BJ (cell line): ENCODE measurements at regions of chr11 and their contacts with region 1.

Region 1: GRCh38 chr11:86608251-86608799 is 64.1 kb downstream of the ME3 start:
- DNase-seq: peak; percentile 26
- H3K4me3 ChIP-seq: no peak overlapping the region
- H3K27me3 ChIP-seq: no peaks in the 10 kb centered on the region
- CTCF ChIP-seq: peak; percentile 88

Region 2: GRCh38 chr11:86456052-86456939 is 152.0 kb before region 1 on chr11:
- CTCF ChIA-PET with region 1: interaction called, 41 read pairs
- POLR2A ChIA-PET with region 1: no interaction called
- DNase-seq: no peak
- H3K4me3 ChIP-seq: no peak overlapping the region
- H3K27me3 ChIP-seq: no peaks in the 10 kb centered on the region
- CTCF ChIP-seq: peak; percentile 89

Region 3: GRCh38 chr11:86592659-86593451 is 15.5 kb before region 1 on chr11:
- CTCF ChIA-PET with region 1: interaction called, 15 read pairs
- POLR2A ChIA-PET with region 1: no interaction called
- DNase-seq: no peak
- H3K4me3 ChIP-seq: no peak overlapping the region
- H3K27me3 ChIP-seq: no peaks in the 10 kb centered on the region
- CTCF ChIP-seq: no peak

Region 4: GRCh38 chr11:86620891-86621521 is 12.7 kb after region 1 on chr11:
- CTCF ChIA-PET with region 1: interaction called, 37 read pairs
- POLR2A ChIA-PET with region 1: no interaction called
- DNase-seq: peak; percentile 79
- H3K4me3 ChIP-seq: no peak overlapping the region
- H3K27me3 ChIP-seq: no peaks in the 10 kb centered on the region
- CTCF ChIP-seq: no peak

Region 5: GRCh38 chr11:86627776-86628455 is 19.6 kb after region 1 on chr11:
- CTCF ChIA-PET with region 1: interaction called, 13 read pairs
- POLR2A ChIA-PET with region 1: no interaction called
- DNase-seq: no peak
- H3K4me3 ChIP-seq: no peak overlapping the region
- H3K27me3 ChIP-seq: no peaks in the 10 kb centered on the region
- CTCF ChIP-seq: no peak

Region 6: DNA sequence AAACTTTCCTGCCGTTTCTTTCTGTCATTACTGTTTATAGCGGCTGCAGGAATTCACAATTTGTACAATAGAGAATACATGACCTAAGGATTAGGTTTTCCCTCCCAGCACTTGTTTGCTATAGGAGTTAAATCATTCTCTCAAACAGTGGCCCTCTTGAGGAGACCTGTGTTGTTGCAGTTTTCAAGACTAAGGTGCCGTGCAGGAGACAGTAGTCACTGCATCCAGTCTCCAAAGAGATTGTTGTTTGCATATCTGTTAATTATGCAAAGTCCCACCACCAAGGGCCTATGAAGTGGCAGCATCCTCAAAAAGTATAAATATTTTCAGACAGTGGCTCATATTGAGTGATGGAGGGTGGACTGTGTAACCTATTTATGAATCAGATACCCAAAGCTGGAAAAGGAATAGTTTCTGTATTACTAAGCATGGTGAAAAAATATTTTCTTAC is 194.3 kb after region 1 on chr11:
- CTCF ChIA-PET with region 1: interaction called, 23 read pairs
- POLR2A ChIA-PET with region 1: no interaction called
- DNase-seq: no peak
- H3K4me3 ChIP-seq: peak overlapping the region; percentile 61
- H3K27me3 ChIP-seq: no peaks in the 10 kb centered on the region
- CTCF ChIP-seq: peak; percentile 62

Region 7: DNA sequence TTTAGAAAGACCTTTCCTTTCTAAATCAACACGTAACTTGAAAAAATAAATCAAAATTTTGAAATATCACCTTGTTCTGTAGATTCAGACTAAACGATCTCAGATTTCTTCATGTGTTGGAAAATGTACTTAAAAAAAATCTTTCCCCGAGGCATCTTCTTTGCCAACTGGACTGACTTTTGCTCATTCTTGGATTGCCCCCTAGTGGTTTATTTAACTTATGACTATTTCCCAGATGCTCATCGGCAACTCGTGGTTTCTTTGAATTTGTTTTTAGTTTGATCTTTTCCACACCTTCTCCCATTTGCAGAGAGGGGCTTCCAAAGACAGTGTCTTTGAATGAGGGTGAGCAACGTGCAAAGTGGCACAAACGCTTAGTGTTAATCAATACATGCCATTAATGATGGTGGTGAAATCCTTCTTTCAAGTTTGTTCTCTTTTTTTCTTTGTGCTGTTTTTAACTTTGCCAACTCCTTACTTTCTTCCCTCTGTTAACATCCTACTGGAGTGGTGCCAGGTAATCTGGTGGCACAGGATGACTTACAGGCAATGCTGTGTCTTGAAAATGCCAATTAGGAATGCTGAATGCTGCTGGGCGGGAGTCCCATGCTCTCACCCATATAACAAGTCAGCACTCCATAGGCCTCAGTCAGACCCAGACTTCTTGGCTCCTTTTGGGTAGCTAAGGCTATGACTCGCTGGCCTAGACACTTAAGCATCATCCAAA is 210.3 kb after region 1 on chr11:
- CTCF ChIA-PET with region 1: interaction called, 16 read pairs
- POLR2A ChIA-PET with region 1: no interaction called
- DNase-seq: no peak
- H3K4me3 ChIP-seq: no peak overlapping the region
- H3K27me3 ChIP-seq: no peaks in the 10 kb centered on the region
- CTCF ChIP-seq: peak; percentile 58